ENCODE measurements at regions of chr15 and their contacts with region 1.

Region 1: DNA sequence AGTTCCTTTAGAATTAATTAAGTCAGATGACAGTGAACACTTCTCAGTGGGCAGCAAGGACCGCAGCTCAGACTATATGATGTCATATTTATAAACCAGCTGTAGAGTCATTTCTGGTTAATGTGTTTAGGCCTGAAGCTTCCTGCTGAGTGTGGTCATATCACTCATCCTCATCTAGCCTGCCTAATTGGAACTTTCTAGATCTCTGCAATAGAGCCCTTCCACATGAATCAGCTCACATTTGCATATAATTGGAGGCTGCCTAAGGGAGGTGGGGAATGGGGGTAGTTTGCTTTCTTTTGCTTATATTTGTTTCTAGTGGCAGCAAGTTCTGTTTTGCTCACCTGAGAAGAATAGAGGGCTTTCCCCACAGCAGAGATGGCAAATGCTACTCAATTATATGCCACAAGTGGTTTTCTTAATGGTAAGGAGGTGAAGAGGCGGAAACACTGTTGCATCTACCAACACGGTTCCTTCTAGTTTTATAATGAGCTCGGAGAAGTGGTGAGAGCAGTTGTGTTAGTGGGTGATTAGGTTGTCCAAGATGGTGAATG is 148.1 kb downstream of the KLHL25 start:
- DNase-seq: no peak
- ATAC-seq: peak; percentile 42
- H3K4me3 Mint-ChIP-seq: no peak overlapping the region
- H3K27ac Mint-ChIP-seq: no peak overlapping the region
- H3K4me1 Mint-ChIP-seq: peaks cover 11% of the 10 kb centered on the region
- H3K27me3 Mint-ChIP-seq: no peaks in the 10 kb centered on the region
- CTCF ChIP-seq: no peak

Region 2: DNA sequence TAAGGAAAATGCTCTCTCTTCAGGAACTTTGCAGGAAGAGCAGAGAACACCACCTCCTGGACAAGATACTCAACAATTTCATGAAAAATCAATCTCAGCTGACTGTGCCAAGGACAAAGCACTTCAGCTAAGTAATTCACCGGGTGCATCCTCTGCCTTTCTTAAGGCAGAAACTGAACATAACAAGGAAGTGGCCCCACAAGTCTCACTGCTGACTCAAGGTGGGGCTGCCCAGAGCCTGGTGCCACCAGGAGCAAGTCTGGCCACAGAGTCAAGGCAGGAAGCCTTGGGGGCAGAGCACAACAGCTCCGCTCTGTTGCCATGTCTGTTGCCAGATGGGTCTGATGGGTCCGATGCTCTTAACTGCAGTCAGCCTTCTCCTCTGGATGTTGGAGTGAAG is 65.7 kb before region 1 on chr15:
- CTCF ChIA-PET with region 1: no interaction called
- POLR2A ChIA-PET with region 1: no interaction called
- intact Hi-C with region 1: no loop called
- DNase-seq: no peak
- ATAC-seq: peak; percentile 60
- H3K4me3 Mint-ChIP-seq: peak overlapping the region; percentile 83
- H3K27ac Mint-ChIP-seq: peak overlapping the region; percentile 90
- H3K4me1 Mint-ChIP-seq: peaks cover 75% of the 10 kb centered on the region
- H3K27me3 Mint-ChIP-seq: no peaks in the 10 kb centered on the region
- CTCF ChIP-seq: no peak

Region 3: GRCh38 chr15:85592148-85592547 is 54.5 kb before region 1 on chr15:
- CTCF ChIA-PET with region 1: no interaction called
- POLR2A ChIA-PET with region 1: no interaction called
- intact Hi-C with region 1: loop called (anchors 10 kb)
- DNase-seq: no peak
- ATAC-seq: no peak
- H3K4me3 Mint-ChIP-seq: no peak overlapping the region
- H3K27ac Mint-ChIP-seq: no peak overlapping the region
- H3K4me1 Mint-ChIP-seq: peaks cover 10% of the 10 kb centered on the region
- H3K27me3 Mint-ChIP-seq: no peaks in the 10 kb centered on the region
- CTCF ChIP-seq: no peak

Region 4: DNA sequence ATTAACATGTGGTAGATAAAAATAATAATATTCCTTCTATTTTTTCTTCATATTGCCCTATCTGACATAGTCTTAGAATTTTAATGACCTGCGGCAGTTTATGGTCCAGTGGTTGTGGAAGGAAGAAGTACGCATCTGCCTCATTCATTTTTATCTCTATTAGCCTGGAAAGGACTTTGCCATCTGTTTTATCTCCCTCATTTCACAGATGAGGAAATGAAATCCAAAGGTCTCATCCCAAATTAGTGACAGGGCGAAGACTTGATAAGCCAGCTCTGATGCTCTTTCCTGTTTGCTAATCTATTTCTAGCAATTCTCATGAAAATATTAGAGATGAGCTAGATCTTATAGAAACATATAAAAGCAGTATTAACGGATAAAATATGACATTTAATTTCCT is 34.8 kb after region 1 on chr15:
- CTCF ChIA-PET with region 1: no interaction called
- POLR2A ChIA-PET with region 1: no interaction called
- intact Hi-C with region 1: loop called (anchors 5 kb)
- DNase-seq: no peak
- ATAC-seq: no peak
- H3K4me3 Mint-ChIP-seq: no peak overlapping the region
- H3K27ac Mint-ChIP-seq: no peak overlapping the region
- H3K4me1 Mint-ChIP-seq: peaks cover 6% of the 10 kb centered on the region
- H3K27me3 Mint-ChIP-seq: no peaks in the 10 kb centered on the region
- CTCF ChIP-seq: no peak